PC-9 (cell line): ENCODE measurements at regions of chr2 and their contacts with region 1.

Region 1: DNA sequence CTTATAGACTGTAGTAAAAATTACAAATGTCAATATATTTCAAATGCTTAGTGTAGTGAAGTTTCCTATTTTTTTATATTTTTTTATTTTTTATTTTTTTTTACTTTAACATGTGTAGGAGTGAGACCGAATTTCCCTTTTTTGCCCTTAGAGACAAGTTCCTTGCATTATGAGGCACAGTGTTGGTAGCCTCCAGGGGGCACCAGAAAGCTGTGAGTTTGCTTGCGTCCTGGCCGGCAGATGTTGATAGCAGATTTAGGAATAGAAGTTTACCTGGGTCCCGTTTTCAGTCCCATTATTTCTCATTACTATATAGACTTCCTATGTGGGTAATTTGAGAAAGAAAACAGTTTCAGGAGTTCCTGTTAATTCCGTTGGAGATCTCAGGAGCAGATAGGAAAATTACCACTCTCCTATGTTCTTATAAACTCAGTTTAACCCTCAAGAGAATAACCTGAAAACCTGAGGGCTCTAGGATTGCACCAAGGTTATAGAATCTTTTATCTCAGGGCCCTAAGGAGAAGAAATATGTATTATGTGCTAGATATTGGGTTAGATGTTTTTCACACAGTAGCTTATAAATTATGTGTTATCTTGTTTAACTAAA is 157.5 kb upstream of the SESTD1 start:
- DNase-seq: peak; percentile 56 to 83
- H3K4me3 ChIP-seq: no peak overlapping the region
- H3K27ac ChIP-seq: no peak overlapping the region
- H3K4me1 ChIP-seq: no peaks in the 10 kb centered on the region
- H3K27me3 ChIP-seq: no peaks in the 10 kb centered on the region
- CTCF ChIP-seq: peak; percentile 88

Region 2: GRCh38 chr2:178761759-178762371 is 660.3 kb before region 1 on chr2:
- CTCF ChIA-PET with region 1: no interaction called
- POLR2A ChIA-PET with region 1: no interaction called
- intact Hi-C with region 1: loop called (anchors 5 kb)
- DNase-seq: peak; percentile 46 to 75
- H3K4me3 ChIP-seq: no peak overlapping the region
- H3K27ac ChIP-seq: no peak overlapping the region
- H3K4me1 ChIP-seq: peaks cover 11% of the 10 kb centered on the region
- H3K27me3 ChIP-seq: no peaks in the 10 kb centered on the region
- CTCF ChIP-seq: peak; percentile 98

Region 3: DNA sequence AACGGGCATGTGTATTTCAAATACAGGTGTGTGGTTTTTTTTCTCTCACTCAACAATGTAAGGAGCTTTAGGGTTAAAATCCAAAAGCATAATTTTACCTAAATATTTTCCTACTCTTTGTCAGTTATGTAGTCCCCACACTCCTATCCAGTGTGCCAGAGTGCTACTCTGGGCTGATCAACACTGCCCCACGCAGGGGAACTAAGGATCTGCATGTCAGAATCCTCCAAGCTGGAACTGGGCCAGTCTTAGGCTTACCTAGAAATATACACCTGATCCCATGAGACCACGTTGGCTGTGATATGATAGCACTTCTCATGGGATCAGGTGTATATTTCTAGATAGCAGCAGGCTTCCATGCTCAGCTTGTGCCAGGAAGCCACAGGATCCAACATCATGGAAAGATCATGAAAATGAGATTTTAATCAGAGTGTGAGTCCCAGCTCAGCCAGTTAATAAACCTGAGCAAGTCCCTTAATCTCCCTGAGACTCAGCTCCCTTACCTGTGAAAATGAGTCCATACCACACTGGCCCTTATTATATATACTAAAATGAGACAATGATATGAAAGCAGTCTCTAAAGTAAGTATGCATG is 401.9 kb before region 1 on chr2:
- CTCF ChIA-PET with region 1: no interaction called
- POLR2A ChIA-PET with region 1: interaction called, 12 read pairs
- intact Hi-C with region 1: no loop called
- DNase-seq: peak in 1 of 2 experiments; percentile 39
- H3K4me3 ChIP-seq: no peak overlapping the region
- H3K27ac ChIP-seq: no peak overlapping the region
- H3K4me1 ChIP-seq: no peaks in the 10 kb centered on the region
- H3K27me3 ChIP-seq: no peaks in the 10 kb centered on the region
- CTCF ChIP-seq: peak; percentile 81

Region 4: DNA sequence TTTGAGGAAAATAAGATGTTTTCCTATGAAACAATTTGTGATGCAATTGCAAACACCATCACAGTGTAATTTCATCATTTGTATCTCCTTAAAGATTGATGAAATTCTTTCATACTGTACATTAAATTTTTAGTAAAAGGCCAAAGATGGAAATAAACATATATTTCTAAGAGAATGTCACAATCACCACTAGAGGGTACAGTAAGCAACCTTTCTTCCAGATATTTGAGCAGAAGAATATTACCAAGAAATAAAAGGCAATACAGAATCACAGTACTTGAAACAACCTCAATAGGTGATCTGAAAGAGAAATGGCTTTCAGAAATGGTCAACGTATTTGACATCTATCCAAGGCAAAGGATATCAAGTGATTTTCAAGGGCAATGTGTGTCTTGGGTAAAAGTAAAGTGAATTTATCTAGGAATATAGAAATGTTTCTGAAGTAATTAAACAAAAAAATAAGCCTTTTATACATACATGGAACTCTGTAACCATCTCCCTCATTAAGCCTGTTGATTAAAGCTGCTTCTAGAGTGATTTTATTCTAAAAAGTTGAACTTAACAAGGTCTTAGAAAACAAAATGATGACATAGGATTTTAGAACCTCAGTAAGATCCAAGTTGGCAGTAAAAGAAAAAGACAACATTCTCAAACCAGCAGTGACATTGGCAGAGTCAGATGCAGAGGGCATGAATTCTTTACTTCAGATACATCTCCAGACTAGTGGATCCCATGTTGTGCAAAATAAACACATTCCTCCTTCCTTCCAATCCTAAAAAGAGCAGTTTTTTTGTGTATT is 67.2 kb before region 1 on chr2:
- CTCF ChIA-PET with region 1: no interaction called
- POLR2A ChIA-PET with region 1: no interaction called
- intact Hi-C with region 1: no loop called
- DNase-seq: no peak
- H3K4me3 ChIP-seq: no peak overlapping the region
- H3K27ac ChIP-seq: no peak overlapping the region
- H3K4me1 ChIP-seq: no peaks in the 10 kb centered on the region
- H3K27me3 ChIP-seq: no peaks in the 10 kb centered on the region
- CTCF ChIP-seq: peak; percentile 72

Region 5: DNA sequence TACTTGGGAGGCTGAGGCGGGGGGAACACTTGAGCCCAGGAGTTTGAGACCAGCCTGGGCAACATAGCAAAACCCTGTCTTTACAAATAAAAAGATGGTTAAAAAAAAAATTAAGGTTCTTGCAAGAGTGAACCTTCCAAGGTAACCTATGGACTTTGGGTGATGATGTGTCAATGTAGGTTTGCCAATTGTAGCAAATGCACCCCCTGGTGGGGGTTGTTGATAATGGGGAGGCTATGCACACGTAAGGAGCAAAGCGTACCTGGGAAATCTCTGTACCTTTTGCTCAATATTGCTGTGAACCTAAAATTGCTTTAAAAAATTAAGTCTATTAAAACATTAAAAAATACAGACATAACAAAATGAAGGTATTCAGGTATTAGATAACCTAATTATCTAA is 514.5 kb after region 1 on chr2:
- CTCF ChIA-PET with region 1: no interaction called
- POLR2A ChIA-PET with region 1: no interaction called
- intact Hi-C with region 1: loop called (anchors 10 kb)
- DNase-seq: peak in 1 of 2 experiments; percentile 34
- H3K4me3 ChIP-seq: no peak overlapping the region
- H3K27ac ChIP-seq: no peak overlapping the region
- H3K4me1 ChIP-seq: no peaks in the 10 kb centered on the region
- H3K27me3 ChIP-seq: no peaks in the 10 kb centered on the region
- CTCF ChIP-seq: peak; percentile 72

Region 6: DNA sequence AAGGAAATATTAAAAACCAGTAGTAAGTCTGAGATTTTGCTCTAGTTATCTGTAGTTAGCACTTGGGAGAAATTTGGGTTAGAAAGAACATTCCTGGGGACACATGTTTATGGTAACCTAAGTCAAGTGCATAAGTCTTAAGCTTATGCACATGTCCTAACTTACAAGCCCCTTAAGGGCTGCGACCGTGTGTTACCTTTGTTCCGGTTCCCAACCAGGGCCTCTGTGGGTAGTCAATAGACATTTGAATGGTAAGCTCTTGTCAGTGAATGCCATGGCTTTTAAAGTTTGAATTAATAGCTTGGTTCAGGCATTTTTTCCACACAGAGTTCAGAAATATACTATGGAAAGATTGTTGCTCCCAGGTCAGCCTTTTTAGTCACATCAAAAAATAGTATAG is 649.7 kb after region 1 on chr2:
- CTCF ChIA-PET with region 1: no interaction called
- POLR2A ChIA-PET with region 1: no interaction called
- intact Hi-C with region 1: loop called (anchors 2 kb)
- DNase-seq: no peak
- H3K4me3 ChIP-seq: no peak overlapping the region
- H3K27ac ChIP-seq: no peak overlapping the region
- H3K4me1 ChIP-seq: no peaks in the 10 kb centered on the region
- H3K27me3 ChIP-seq: no peaks in the 10 kb centered on the region
- CTCF ChIP-seq: no peak